ENCODE measurements at regions of chr15 and their contacts with region 1.

Region 1: DNA sequence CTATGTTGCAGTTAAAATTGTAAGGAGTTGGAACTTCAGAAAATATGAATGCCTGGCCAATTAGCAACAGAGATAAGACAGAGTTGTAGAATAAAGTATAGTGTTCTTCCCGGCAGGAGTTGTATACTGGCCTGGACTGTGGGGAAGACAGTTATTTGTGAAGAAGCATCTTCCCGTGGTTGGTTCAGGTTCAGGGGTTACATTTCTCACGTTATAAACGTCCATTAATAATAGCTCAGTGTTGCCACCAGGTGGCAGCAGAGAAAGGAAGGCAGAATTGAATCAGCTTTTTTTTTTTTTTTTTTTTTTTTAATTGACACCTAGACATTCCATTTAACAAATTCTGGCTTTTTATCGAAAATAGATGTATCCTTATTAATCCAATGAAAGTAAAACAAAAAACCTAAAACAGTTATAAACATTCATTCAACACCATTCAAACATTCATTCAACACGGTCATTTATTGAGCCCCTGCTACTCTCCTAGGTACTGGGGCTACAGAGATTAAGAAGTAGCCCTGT is 66.4 kb upstream of the NR2E3 start:
- DNase-seq: peak; percentile 49
- H3K4me3 ChIP-seq: no peak overlapping the region
- H3K27ac ChIP-seq: peak overlapping the region; percentile 35 to 45
- H3K4me1 ChIP-seq: no peaks in the 10 kb centered on the region
- H3K27me3 ChIP-seq: no peaks in the 10 kb centered on the region
- CTCF ChIP-seq: peak; percentile 64 to 81 (median 77)
- POLR2A ChIP-seq: no peak

Region 2: GRCh38 chr15:71800835-71801745 is 57.2 kb after region 1 on chr15:
- intact Hi-C with region 1: loop called (anchors 5 kb)
- DNase-seq: peak; percentile 55
- H3K4me3 ChIP-seq: no peak overlapping the region
- H3K27ac ChIP-seq: no peak overlapping the region
- H3K4me1 ChIP-seq: no peaks in the 10 kb centered on the region
- H3K27me3 ChIP-seq: no peaks in the 10 kb centered on the region
- CTCF ChIP-seq: peak; percentile 73 to 98 (median 92)
- POLR2A ChIP-seq: no peak

Region 3: GRCh38 chr15:72155635-72156616 is 412.0 kb after region 1 on chr15:
- intact Hi-C with region 1: loop called (anchors 10 kb)
- DNase-seq: peak; percentile 93
- H3K4me3 ChIP-seq: peak overlapping the region; percentile 36
- H3K27ac ChIP-seq: peak overlapping the region; percentile 88 to 94
- H3K4me1 ChIP-seq: peaks cover 10% of the 10 kb centered on the region
- H3K27me3 ChIP-seq: no peaks in the 10 kb centered on the region
- CTCF ChIP-seq: peak; percentile 46 to 95 (median 88)
- POLR2A ChIP-seq: no peak

Measured in prostate gland (tissue), 2 donors.